ENCODE measurements at regions of chr10 and their contacts with region 1.

Region 1: DNA sequence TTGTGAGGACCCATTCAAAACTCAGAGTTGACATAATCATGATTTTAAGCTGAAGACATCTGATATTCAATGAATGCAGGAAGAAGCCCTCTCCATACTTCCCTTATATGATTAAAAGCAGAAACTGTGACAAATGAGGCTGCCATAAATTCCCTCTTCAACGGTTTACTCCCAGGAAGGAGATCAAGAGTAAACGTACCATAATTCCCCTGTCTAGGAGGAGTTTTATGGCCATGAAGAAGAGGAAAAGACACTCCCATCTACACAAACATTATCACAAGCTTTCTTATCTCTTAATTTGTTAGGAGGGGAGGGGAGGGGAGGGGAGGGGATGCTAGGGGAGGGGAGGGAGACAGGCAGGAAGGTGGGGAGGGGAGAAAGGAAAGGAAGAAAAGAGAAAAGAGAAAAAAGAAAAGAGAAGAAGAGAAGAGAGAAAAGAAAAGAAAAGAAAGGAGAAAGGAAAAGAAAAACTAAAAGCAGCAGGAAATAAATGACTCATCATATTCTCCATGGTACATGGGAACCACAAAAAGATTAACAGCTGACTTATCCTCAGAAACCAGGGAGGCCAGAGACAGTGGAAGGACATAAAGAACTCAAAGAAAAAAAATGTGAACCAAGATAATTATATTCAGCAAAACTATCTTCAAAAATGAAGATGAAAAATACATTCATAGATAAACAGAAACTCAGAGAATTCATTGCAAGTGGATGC is 121.6 kb downstream of the ALOX5 start:
- DNase-seq: no peak
- H3K4me3 ChIP-seq: no peak overlapping the region
- CTCF ChIP-seq: no peak

Region 2: GRCh38 chr10:45672181-45673073 is 176.8 kb after region 1 on chr10 and contains the start of gene ZFAND4:
- in situ Hi-C with region 1: loop called (anchors 25 kb)
- DNase-seq: peak; percentile 90
- H3K4me3 ChIP-seq: peak within 1 kb of the TSS; percentile 79
- CTCF ChIP-seq: peak; percentile 22